ENCODE measurements at regions of chr2 and their contacts with region 1.

Region 1: GRCh38 chr2:233566141-233566960 is at the start of gene USP40:
- DNase-seq: peak; percentile 92
- H3K4me3 ChIP-seq: peak within 1 kb of the TSS; percentile 59 to 98 (median 93)
- H3K27ac ChIP-seq: peak within 1 kb of the TSS; percentile 98
- H3K4me1 ChIP-seq: peaks cover 6% of the 10 kb centered on the region
- H3K27me3 ChIP-seq: peaks cover 0 to 2% of the 10 kb centered on the region in 2 experiments
- CTCF ChIP-seq: no peak
- POLR2A ChIP-seq: peak; percentile 98
- total RNA-seq, gene USP40: 32.5 and 36.5 TPM in 2 replicates

Region 2: GRCh38 chr2:233711312-233712008 is 145.1 kb after region 1 on chr2:
- CTCF ChIA-PET with region 1: interaction called, 10 read pairs
- POLR2A ChIA-PET with region 1: no interaction called
- dilution Hi-C with region 1: no loop called
- intact Hi-C with region 1: loop called (anchors 1 kb)
- DNase-seq: peak; percentile 66
- H3K4me3 ChIP-seq: no peak overlapping the region
- H3K27ac ChIP-seq: no peak overlapping the region
- H3K4me1 ChIP-seq: peaks cover 2% of the 10 kb centered on the region
- H3K27me3 ChIP-seq: peaks cover 0 to 2% of the 10 kb centered on the region in 2 experiments
- CTCF ChIP-seq: peak; percentile 89 to 90
- POLR2A ChIP-seq: no peak

Region 3: DNA sequence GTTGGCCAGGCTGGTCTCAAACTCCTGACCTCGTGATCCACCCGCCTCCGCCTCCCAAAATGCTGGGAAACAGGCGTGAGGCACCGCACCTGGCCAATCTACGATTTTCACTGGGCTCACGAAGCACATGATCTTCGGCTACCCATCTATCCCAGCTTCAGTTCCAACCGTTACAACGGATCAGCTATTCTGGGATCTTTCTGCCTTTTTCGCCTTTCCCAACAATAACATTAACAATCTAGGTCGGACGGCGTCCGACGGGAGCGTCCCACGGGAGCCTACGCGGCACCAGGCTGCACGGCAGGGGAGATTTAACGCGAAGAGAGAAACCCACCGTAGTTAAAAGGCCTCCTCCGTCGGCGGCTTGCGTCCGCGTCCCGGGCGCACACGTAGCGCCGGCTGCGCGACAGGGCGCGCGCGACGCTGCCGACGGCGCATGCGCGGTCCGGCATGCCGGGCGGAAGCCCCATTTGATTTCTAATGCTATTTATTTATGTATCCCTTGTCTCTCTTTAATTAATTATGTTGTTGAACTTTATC is 301.7 kb after region 1 on chr2 and contains the start of gene MSL3B:
- CTCF ChIA-PET with region 1: no interaction called
- POLR2A ChIA-PET with region 1: no interaction called
- dilution Hi-C with region 1: no loop called
- intact Hi-C with region 1: loop called (anchors 5 kb)
- DNase-seq: peak; percentile 70
- H3K4me3 ChIP-seq: peak within 1 kb of the TSS; percentile 46 to 90 (median 75)
- H3K27ac ChIP-seq: peak within 1 kb of the TSS; percentile 71
- H3K4me1 ChIP-seq: peaks cover 5% of the 10 kb centered on the region
- H3K27me3 ChIP-seq: peaks cover 5 to 26% of the 10 kb centered on the region in 2 experiments
- CTCF ChIP-seq: no peak
- POLR2A ChIP-seq: peak; percentile 76

Measured in endothelial cell of umbilical vein (primary cell).